Panc1 (cell line): ENCODE measurements at regions of chr1 and their contacts with region 1.

Region 1: GRCh38 chr1:47023302-47024140 is at the start of gene CYP4X1:
- DNase-seq: no peak
- ATAC-seq: peak; percentile 79
- H3K4me3 ChIP-seq: peak within 1 kb of the TSS; percentile 33 to 44
- H3K27ac ChIP-seq: no peak within 1 kb of the TSS
- H3K4me1 ChIP-seq: no peaks in the 10 kb centered on the region; the same call in 1 of the 2 replicates
- H3K27me3 ChIP-seq: peaks cover 17% of the 10 kb centered on the region; the same call in 1 of the 2 replicates
- CTCF ChIP-seq: no peak
- total RNA-seq, gene CYP4X1: 1.3 TPM

Region 2: DNA sequence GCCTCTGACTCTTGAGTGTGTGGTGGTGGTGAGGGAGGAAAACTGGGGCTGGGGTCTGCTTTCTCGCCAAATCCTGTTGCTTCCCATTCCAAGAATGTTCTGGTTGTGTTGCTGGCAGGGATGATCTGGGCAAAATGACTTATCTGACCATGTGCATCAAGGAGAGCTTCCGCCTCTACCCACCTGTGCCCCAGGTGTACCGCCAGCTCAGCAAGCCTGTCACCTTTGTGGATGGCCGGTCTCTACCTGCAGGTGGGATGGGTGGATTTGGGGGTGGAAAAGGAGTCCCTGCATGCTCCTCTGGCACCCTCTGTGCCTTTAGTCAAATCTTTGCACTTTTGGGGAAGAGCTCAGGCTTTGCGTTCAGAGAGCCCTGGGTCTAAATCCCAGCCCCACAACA is 206.6 kb before region 1 on chr1:
- CTCF ChIA-PET with region 1: no interaction called
- POLR2A ChIA-PET with region 1: interaction called, 21 read pairs
- in situ Hi-C with region 1: no loop called
- intact Hi-C with region 1: no loop called
- DNase-seq: no peak
- ATAC-seq: no peak
- H3K4me3 ChIP-seq: no peak overlapping the region
- H3K27ac ChIP-seq: no peak overlapping the region
- H3K4me1 ChIP-seq: no peaks in the 10 kb centered on the region
- H3K27me3 ChIP-seq: no peaks in the 10 kb centered on the region
- CTCF ChIP-seq: no peak

Region 3: GRCh38 chr1:46983830-46984586 is 39.5 kb before region 1 on chr1:
- CTCF ChIA-PET with region 1: no interaction called
- POLR2A ChIA-PET with region 1: no interaction called
- in situ Hi-C with region 1: no loop called
- intact Hi-C with region 1: no loop called
- DNase-seq: no peak
- ATAC-seq: no peak
- H3K4me3 ChIP-seq: no peak overlapping the region
- H3K27ac ChIP-seq: no peak overlapping the region
- H3K4me1 ChIP-seq: no peaks in the 10 kb centered on the region
- H3K27me3 ChIP-seq: no peaks in the 10 kb centered on the region
- CTCF ChIP-seq: no peak